Esophagus muscularis mucosa (tissue), 4 donors: ENCODE measurements at regions of chr7 and their contacts with region 1.

Region 1: DNA sequence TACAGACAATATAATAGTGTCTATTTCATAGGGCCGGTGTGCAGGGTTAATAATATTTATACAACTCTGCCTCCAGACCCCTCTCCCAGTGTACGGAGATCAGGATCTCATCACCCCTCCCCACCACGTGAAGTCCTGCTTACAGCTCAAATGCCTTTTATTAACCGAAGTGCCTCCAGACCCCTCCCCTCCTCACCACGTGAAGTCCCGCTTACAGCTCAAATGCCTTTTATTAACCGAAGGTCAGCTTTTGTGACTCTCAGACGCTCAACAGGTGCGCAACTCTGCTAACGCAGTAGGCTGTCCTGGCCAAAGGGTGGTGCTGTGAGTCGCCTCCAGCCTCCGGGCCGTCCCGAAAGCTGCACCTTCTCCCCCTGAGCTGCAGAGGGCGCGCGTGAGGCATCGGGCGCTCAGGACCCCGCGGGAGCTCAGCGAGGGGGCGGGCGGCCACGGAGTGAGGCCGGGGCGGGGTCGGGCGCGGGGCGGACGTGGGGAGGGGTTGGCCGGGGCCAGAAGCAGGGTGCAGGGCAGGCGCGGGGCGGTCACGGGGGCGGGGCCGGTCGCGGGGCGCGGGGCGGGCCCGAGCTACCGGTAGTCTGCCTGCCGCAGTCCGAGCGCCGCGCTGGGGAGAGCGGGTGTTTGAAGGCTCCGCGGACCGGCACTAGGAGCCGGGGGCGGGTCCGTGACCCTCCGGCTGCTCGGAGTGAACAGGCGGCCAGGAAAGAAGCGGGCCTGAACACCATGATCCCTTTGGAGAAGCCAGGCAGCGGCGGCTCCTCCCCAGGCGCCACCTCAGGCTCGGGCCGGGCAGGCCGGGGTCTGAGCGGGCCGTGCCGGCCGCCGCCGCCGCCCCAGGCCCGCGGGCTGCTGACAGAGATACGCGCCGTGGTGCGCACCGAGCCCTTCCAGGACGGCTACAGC is at the start of gene STK17A:
- DNase-seq: peak; percentile 98
- H3K4me3 ChIP-seq: peak within 1 kb of the TSS; percentile 94 to 100 (median 96)
- H3K27ac ChIP-seq: peak within 1 kb of the TSS; percentile 93 to 99 (median 96)
- H3K4me1 ChIP-seq: peaks cover 8 to 31% (median 27%) of the 10 kb centered on the region in 4 donors
- H3K27me3 ChIP-seq: no peaks in the 10 kb centered on the region
- CTCF ChIP-seq: peak in 2 of 3 experiments; percentile 99 to 100
- EP300 ChIP-seq: no peak
- POLR2A ChIP-seq: peak; percentile 83
- total RNA-seq, gene STK17A: 19.5 to 33.3 (median 24.6) TPM

Region 2: DNA sequence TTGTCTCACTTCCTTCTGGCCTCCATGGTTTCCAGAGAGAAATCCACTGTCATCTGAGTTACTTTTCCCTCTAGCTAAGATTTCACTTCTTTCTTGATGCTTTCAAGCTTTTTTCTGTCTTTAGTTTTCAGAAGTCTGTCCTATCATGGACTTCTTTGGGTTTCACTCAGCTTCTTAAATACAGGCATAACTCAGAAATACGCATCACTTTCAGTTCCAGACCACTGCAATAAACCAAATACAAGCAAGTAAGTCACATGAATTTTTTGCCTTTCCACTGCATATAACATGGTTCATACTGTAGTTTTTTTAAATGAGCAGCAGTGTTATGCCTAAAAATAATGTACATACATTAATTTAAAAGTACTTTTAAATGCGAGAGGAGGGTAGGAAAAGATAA is 48.8 kb after region 1 on chr7:
- intact Hi-C with region 1: loop called (anchors 5 kb)
- DNase-seq: no peak
- H3K4me3 ChIP-seq: no peak overlapping the region
- H3K27ac ChIP-seq: no peak overlapping the region
- H3K4me1 ChIP-seq: peaks cover 8 to 22% (median 15%) of the 10 kb centered on the region in 4 donors
- H3K27me3 ChIP-seq: no peaks in the 10 kb centered on the region
- CTCF ChIP-seq: no peak
- EP300 ChIP-seq: no peak
- POLR2A ChIP-seq: no peak

Region 3: GRCh38 chr7:43647673-43648472 is 65.1 kb after region 1 on chr7:
- intact Hi-C with region 1: loop called (anchors 5 kb)
- DNase-seq: no peak
- H3K4me3 ChIP-seq: peak overlapping the region; percentile 8 to 37 (median 24)
- H3K27ac ChIP-seq: peak overlapping the region; percentile 90 to 94 (median 92)
- H3K4me1 ChIP-seq: peaks cover 72 to 83% (median 76%) of the 10 kb centered on the region in 4 donors
- H3K27me3 ChIP-seq: no peaks in the 10 kb centered on the region
- CTCF ChIP-seq: no peak
- EP300 ChIP-seq: no peak
- POLR2A ChIP-seq: no peak

Region 4: GRCh38 chr7:43700059-43700501 is 117.3 kb after region 1 on chr7:
- intact Hi-C with region 1: loop called (anchors 1 kb)
- DNase-seq: no peak
- H3K4me3 ChIP-seq: no peak overlapping the region
- H3K27ac ChIP-seq: no peak overlapping the region
- H3K4me1 ChIP-seq: peaks cover 0 to 34% (median 23%) of the 10 kb centered on the region in 4 donors
- H3K27me3 ChIP-seq: no peaks in the 10 kb centered on the region
- CTCF ChIP-seq: peak; percentile 67 to 71 (median 68)
- EP300 ChIP-seq: no peak
- POLR2A ChIP-seq: no peak

Region 5: GRCh38 chr7:43721193-43721806 is 138.5 kb after region 1 on chr7:
- intact Hi-C with region 1: loop called (anchors 5 kb)
- DNase-seq: no peak
- H3K4me3 ChIP-seq: no peak overlapping the region
- H3K27ac ChIP-seq: no peak overlapping the region
- H3K4me1 ChIP-seq: peaks cover 9 to 28% (median 19%) of the 10 kb centered on the region in 4 donors
- H3K27me3 ChIP-seq: no peaks in the 10 kb centered on the region
- CTCF ChIP-seq: peak; percentile 65 to 74 (median 70)
- EP300 ChIP-seq: no peak
- POLR2A ChIP-seq: no peak

Region 6: GRCh38 chr7:43834463-43835251 is 251.9 kb after region 1 on chr7:
- intact Hi-C with region 1: loop called (anchors 2 kb)
- DNase-seq: no peak
- H3K4me3 ChIP-seq: peak overlapping the region; percentile 16 to 34 (median 24)
- H3K27ac ChIP-seq: no peak overlapping the region
- H3K4me1 ChIP-seq: peaks cover 4 to 12% (median 8%) of the 10 kb centered on the region in 4 donors
- H3K27me3 ChIP-seq: no peaks in the 10 kb centered on the region
- CTCF ChIP-seq: no peak
- EP300 ChIP-seq: no peak
- POLR2A ChIP-seq: no peak